Heart right ventricle (tissue), 16 donors: ENCODE measurements at regions of chr11 and their contacts with region 1.

Region 1: GRCh38 chr11:57249384-57250319 is 12.6 kb upstream of the APLNR start:
- DNase-seq: peak; percentile 69 to 75
- ATAC-seq: peak; percentile 38 to 88 (median 70)
- H3K4me3 ChIP-seq: peak overlapping the region in 4 of 10 donors; percentile 2 to 30 (median 14)
- H3K27ac ChIP-seq: peak overlapping the region in 6 of 10 donors; percentile 12 to 75 (median 50)
- H3K4me1 ChIP-seq: peaks cover 0 to 37% (median 27%) of the 10 kb centered on the region in 9 donors
- H3K27me3 ChIP-seq: peaks cover 0 to 8% (median 0%) of the 10 kb centered on the region in 7 donors
- CTCF ChIP-seq: peak; percentile 70 to 88 (median 84)

Region 2: DNA sequence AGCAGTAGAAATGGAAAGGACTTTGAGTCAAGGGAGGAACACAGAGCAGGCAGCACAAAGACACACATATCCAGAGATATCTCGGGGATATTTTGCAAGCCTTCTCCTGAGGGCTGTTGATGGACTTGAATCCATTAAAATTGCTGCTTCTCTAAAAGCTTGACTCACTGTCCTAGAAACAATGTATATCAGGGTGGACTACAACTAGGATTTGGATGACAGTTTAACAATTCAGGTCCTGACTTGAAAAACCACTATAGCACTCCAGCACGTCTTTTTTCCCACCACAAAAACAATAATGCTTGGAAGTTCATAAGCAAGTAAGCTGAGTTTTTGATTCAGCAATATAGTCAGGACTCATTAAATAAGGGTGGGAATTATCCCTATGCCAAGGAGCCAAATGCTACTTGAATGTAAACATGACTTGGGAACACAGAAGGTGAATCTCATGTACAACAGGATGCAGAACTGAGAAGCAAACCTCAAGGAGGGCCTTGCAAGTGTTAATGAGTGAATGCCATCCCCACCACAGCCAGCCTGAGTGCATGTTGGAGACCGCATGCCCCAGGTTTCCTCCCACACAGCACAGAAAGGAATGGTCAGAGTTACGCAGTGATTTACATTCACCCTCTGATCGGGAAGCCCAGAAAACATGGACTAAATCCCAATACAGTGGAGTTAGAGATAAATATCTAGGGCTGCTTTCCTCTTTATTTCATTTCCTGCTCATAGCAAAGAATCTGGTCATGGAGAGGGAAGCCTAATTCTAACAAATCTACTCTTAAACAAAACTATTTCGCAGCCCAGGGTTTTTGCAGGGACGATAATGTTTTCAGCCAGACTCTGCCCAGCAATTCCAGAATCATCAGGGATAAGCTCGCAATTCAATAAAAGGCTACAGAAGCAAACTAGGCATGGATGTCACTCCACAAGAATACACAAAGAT is 402.7 kb before region 1 on chr11:
- intact Hi-C with region 1: loop called in 4 of 10 experiments (anchors 1 to 5 kb)
- DNase-seq: no peak
- ATAC-seq: no peak
- H3K4me3 ChIP-seq: no peak overlapping the region
- H3K27ac ChIP-seq: no peak overlapping the region
- H3K4me1 ChIP-seq: no peaks in the 10 kb centered on the region
- H3K27me3 ChIP-seq: peaks cover 0 to 12% (median 0%) of the 10 kb centered on the region in 7 donors
- CTCF ChIP-seq: no peak

Region 3: GRCh38 chr11:57131080-57131790 is 118.4 kb before region 1 on chr11:
- intact Hi-C with region 1: loop called (anchors 1 to 5 kb)
- DNase-seq: peak; percentile 14 to 20
- ATAC-seq: peak in 7 of 8 donors; percentile 62 to 82 (median 77)
- H3K4me3 ChIP-seq: no peak overlapping the region
- H3K27ac ChIP-seq: no peak overlapping the region
- H3K4me1 ChIP-seq: peaks cover 0 to 10% (median 0%) of the 10 kb centered on the region in 9 donors
- H3K27me3 ChIP-seq: peaks cover 0 to 11% (median 0%) of the 10 kb centered on the region in 7 donors
- CTCF ChIP-seq: peak; percentile 44 to 79 (median 66)

Region 4: DNA sequence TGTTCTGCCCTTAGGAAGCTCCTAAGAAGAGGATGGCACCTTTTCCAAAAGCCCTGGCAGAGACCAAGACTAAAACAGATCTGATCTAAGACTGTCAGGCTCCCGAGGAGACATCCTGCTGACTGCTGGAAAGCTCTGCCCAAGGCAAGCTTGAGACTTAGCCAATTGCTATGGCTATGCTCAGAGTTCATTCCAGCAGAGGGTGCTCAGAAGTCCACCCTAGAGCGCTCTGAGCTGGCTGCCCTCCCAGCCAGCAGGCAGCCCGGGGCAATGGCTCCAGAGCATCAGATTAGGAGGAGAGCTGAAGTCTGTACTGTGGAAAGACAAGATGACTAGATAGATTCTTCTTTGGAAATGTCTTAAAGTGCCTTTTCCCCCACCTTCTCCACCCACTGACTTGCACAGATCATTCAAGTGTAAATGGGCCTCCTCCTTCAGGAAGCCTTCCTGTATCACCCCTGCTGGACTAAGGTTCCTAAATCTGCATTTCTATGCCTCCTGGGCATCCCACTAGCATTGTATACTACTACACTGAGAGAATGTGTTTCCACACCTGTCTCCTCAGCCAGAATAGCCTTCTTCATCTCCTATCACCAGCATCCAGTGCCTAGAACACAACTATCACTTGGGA is 44.5 kb before region 1 on chr11:
- intact Hi-C with region 1: loop called in 4 of 10 experiments (anchors 5 kb)
- DNase-seq: peak in 1 of 2 donors; percentile 30
- ATAC-seq: peak in 7 of 8 donors; percentile 13 to 49 (median 22)
- H3K4me3 ChIP-seq: no peak overlapping the region
- H3K27ac ChIP-seq: peak overlapping the region in 7 of 10 donors; percentile 6 to 83 (median 46)
- H3K4me1 ChIP-seq: peaks cover 26 to 84% (median 52%) of the 10 kb centered on the region in 9 donors
- H3K27me3 ChIP-seq: peaks cover 0 to 5% (median 0%) of the 10 kb centered on the region in 7 donors
- CTCF ChIP-seq: peak in 5 of 9 donors; percentile 16 to 48 (median 37)

Region 5: GRCh38 chr11:58133309-58134076 is 883.8 kb after region 1 on chr11:
- intact Hi-C with region 1: no loop called
- DNase-seq: no peak
- ATAC-seq: no peak
- H3K4me3 ChIP-seq: no peak overlapping the region
- H3K27ac ChIP-seq: no peak overlapping the region
- H3K4me1 ChIP-seq: no peaks in the 10 kb centered on the region
- H3K27me3 ChIP-seq: no peaks in the 10 kb centered on the region
- CTCF ChIP-seq: no peak